ENCODE measurements at regions of chr2 and their contacts with region 1.

Region 1: GRCh38 chr2:120174963-120175581 is 48.1 kb downstream of the TMEM185B start:
- DNase-seq: no peak
- ATAC-seq: peak in 2 of 4 donors; percentile 18 to 51
- H3K4me3 ChIP-seq: no peak overlapping the region
- H3K27ac ChIP-seq: no peak overlapping the region
- H3K4me1 ChIP-seq: peaks cover 0 to 20% (median 8%) of the 10 kb centered on the region in 12 donors
- H3K27me3 ChIP-seq: no peaks in the 10 kb centered on the region
- CTCF ChIP-seq: peak; percentile 66 to 83 (median 77)
- POLR2A ChIP-seq: no peak

Region 2: GRCh38 chr2:119702918-119703401 is 472.1 kb before region 1 on chr2:
- intact Hi-C with region 1: loop called in 9 of 10 experiments (anchors 2 to 10 kb)
- DNase-seq: peak; percentile 64 to 86 (median 66)
- ATAC-seq: peak; percentile 79 to 91 (median 90)
- H3K4me3 ChIP-seq: no peak overlapping the region
- H3K27ac ChIP-seq: no peak overlapping the region
- H3K4me1 ChIP-seq: peaks cover 0 to 25% (median 3%) of the 10 kb centered on the region in 12 donors
- H3K27me3 ChIP-seq: no peaks in the 10 kb centered on the region
- CTCF ChIP-seq: peak; percentile 85 to 96 (median 92)
- POLR2A ChIP-seq: no peak

Region 3: DNA sequence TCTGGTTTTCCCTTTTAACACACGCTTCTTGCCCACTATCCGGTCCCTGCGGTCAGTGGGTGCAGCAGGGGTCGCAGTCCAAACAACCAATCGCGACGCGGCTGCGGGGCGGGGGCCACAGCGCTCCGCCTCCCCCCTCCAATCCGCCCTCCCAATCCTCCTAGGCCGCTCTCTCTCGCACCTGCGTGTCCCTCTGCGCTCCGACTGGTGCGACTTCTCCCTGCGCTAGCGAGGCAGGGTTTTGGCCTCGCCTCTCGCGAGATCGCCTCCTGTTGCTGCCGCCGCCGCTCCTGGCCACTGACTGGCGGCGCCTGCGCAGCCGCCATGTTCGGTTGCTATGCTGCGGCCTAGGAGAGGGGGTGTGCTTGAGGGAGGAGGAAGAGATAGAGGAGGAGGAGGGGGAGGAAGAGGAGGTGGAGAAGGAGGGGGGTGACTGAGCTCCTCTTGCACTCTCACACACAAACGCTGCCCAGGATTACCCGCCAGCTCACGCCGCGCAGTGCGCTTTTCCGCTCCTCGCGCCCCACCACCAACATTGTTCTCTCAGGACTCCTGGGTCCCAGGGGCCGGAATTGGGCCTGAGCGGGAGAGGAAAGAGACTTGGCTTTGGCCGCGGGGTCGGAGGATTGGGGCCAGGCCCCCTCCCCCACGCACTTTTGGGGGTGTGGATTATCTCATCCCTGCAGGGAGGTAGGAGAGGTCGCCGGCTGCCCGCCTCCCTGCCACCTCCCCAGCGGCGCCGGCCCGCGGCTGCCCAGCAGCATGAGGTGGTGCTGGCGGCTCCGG is 415.4 kb before region 1 on chr2 and contains the start of gene PTPN4:
- intact Hi-C with region 1: loop called (anchors 2 to 5 kb)
- DNase-seq: peak; percentile 97 to 98 (median 98)
- ATAC-seq: peak; percentile 97 to 98 (median 98)
- H3K4me3 ChIP-seq: peak within 1 kb of the TSS; percentile 62 to 95 (median 86)
- H3K27ac ChIP-seq: peak within 1 kb of the TSS; percentile 87 to 98 (median 96)
- H3K4me1 ChIP-seq: peaks cover 0 to 46% (median 33%) of the 10 kb centered on the region in 12 donors
- H3K27me3 ChIP-seq: no peaks in the 10 kb centered on the region
- CTCF ChIP-seq: peak in 2 of 12 donors; percentile 14 to 16
- POLR2A ChIP-seq: peak in 1 of 2 donors; percentile 84
- total RNA-seq, gene PTPN4: 21.2 to 49.0 (median 43.6) TPM

Region 4: DNA sequence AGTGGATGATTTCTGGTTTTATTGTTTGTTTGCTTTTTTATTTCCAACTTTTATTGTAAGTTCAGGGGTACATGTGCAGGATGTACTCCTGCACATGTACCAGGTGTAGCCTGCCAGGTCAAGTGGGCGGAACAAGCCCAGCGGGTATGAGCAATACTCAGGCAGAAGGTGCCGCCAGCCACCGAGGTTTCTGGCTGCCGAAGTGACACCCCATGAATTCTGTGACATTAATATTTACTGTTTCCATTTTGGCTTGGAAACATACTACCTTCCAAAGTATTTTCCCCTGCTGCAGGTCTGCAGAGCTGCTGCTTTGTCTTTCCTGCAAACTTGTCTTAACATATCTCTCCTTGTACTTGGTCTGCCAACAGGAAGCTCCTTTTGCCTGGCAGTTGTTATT is 336.9 kb before region 1 on chr2:
- intact Hi-C with region 1: loop called in 2 of 10 experiments (anchors 10 kb)
- DNase-seq: no peak
- ATAC-seq: no peak
- H3K4me3 ChIP-seq: no peak overlapping the region
- H3K27ac ChIP-seq: no peak overlapping the region
- H3K4me1 ChIP-seq: peaks cover 0 to 15% (median 2%) of the 10 kb centered on the region in 12 donors
- H3K27me3 ChIP-seq: no peaks in the 10 kb centered on the region
- CTCF ChIP-seq: no peak
- POLR2A ChIP-seq: no peak

Region 5: GRCh38 chr2:120109186-120110061 is 65.6 kb before region 1 on chr2:
- intact Hi-C with region 1: loop called in 7 of 10 experiments (anchors 2 to 5 kb)
- DNase-seq: no peak
- ATAC-seq: peak; percentile 5 to 65 (median 48)
- H3K4me3 ChIP-seq: no peak overlapping the region
- H3K27ac ChIP-seq: no peak overlapping the region
- H3K4me1 ChIP-seq: peaks cover 3 to 29% (median 19%) of the 10 kb centered on the region in 12 donors
- H3K27me3 ChIP-seq: no peaks in the 10 kb centered on the region
- CTCF ChIP-seq: peak in 11 of 12 donors; percentile 20 to 58 (median 50)
- POLR2A ChIP-seq: no peak

Measured in heart left ventricle (tissue), 16 donors.